Dendritic cell treated with granulocyte-macrophage colony-stimulating factor and Interleukin-4, amounts not matched to agents 40 ng/mL and 50 ng/mL, for 4 days (primary cell): ENCODE measurements at regions of chr10 and their contacts with region 1.

Region 1: DNA sequence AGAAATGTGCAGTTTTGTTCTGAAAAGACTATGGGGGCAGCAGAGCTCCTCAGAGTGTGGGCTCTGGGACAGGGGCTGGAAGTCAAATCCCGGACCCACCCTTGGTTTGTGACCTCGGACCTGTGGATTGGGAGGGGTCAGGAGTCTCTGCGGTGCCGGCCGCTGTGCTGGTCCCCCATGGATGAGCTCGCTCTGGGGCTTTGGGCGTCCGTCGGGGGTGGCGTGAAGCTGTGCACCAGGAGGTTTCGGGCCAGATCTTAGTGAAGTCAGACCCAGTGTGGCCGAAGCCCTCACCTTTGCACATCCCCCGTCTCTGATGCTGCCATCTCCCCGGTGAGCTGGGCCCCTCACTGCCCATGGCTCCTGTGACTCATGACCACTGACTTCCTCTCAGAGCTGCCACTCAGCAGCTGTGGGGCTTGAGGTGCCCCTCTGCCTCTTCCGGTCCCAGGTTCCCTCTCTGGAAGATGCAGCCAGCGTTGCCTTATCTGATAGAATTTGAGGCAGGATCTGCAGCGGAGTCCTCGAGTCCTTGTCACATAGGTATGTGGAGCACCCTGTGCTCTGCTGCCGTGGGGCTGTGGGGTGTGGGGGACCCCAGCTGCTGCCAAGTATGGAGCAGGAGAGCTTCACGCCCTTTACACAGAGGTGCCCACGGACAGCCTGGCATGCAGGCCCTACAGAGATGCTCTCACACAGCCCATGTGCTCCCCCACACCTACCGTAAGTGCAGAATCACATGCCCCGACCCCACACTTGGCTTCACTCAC is 11.4 kb upstream of the SCART1 start:
- H3K4me3 Mint-ChIP-seq: no peak overlapping the region
- H3K27ac Mint-ChIP-seq: no peak overlapping the region
- H3K4me1 Mint-ChIP-seq: peaks cover 11% of the 10 kb centered on the region
- H3K27me3 Mint-ChIP-seq: peaks cover 15% of the 10 kb centered on the region

Region 2: DNA sequence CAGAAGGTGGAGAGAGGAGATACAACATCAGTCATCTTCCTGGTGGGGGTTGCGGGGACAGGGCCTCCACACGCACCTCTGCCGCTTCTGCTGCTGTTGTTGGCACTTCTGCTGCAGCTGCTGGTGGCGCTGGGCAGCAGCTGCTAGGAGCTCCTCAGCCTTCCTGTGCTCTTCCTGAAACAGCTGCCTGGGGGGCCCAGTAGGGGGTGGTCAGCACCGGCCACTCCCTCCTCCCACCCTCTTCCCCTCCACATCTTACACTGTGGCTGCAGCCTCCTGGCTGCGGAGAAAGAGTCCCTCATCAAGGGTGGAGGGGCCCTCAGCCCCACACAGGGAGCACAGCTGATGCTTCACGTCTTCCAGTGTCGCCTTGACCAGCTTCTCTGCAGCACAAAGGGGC is 113.1 kb after region 1 on chr10:
- intact Hi-C with region 1: no loop called
- H3K4me3 Mint-ChIP-seq: no peak overlapping the region
- H3K27ac Mint-ChIP-seq: no peak overlapping the region
- H3K4me1 Mint-ChIP-seq: no peaks in the 10 kb centered on the region
- H3K27me3 Mint-ChIP-seq: peaks cover 9% of the 10 kb centered on the region

Region 3: GRCh38 chr10:133565441-133566294 is 123.3 kb after region 1 on chr10 and contains the start of gene SYCE1:
- intact Hi-C with region 1: loop called (anchors 5 kb)
- H3K4me3 Mint-ChIP-seq: no peak within 1 kb of the TSS
- H3K27ac Mint-ChIP-seq: no peak within 1 kb of the TSS
- H3K4me1 Mint-ChIP-seq: no peaks in the 10 kb centered on the region
- H3K27me3 Mint-ChIP-seq: peaks cover 26% of the 10 kb centered on the region